Prostate gland (tissue), 2 donors: ENCODE measurements at regions of chr17 and their contacts with region 1.

Region 1: GRCh38 chr17:10618202-10618635 is 38.9 kb downstream of the MYH3 start:
- DNase-seq: peak; percentile 45
- H3K4me3 ChIP-seq: no peak overlapping the region
- H3K27ac ChIP-seq: no peak overlapping the region
- H3K4me1 ChIP-seq: no peaks in the 10 kb centered on the region
- H3K27me3 ChIP-seq: no peaks in the 10 kb centered on the region
- CTCF ChIP-seq: peak in 3 of 4 experiments; percentile 61 to 74 (median 71)
- POLR2A ChIP-seq: no peak

Region 2: GRCh38 chr17:9924735-9925191 is 693.5 kb before region 1 on chr17:
- intact Hi-C with region 1: loop called (anchors 5 kb)
- DNase-seq: peak; percentile 42
- H3K4me3 ChIP-seq: no peak overlapping the region
- H3K27ac ChIP-seq: no peak overlapping the region
- H3K4me1 ChIP-seq: no peaks in the 10 kb centered on the region
- H3K27me3 ChIP-seq: no peaks in the 10 kb centered on the region
- CTCF ChIP-seq: peak; percentile 60 to 86 (median 79)
- POLR2A ChIP-seq: no peak

Region 3: DNA sequence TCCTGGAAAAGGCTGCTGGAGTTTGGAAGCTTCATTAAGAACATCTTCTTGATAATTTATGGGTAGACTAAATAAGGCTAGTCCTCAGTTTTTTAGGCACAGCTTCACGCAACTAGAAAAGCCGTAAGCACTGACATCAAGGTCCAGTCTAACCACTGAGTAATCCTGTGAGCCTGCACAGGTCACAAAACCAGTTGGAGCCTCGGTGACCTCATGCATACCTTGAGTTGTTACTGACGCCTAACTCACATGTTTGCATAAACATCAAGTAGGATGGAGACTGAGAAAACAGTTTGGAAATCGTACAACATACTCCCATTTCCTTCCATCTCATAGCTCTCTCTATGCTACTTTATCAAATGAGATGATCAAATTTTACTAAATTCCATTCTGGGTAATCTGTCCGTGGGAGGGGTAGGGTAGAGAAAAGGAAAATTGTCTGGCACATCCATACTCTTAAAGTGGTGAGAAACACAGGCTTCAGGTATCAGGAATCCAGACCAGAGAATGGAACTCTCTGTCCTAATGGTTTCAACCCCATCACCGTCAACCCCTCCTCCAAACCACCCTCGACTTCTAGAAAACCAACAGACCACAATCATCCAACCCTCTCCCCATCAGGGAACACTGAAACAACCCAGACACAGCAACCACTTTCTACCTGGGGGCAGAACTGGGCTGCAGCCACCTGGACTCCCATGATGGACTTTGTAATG is 649.2 kb before region 1 on chr17:
- intact Hi-C with region 1: loop called (anchors 10 kb)
- DNase-seq: no peak
- H3K4me3 ChIP-seq: no peak overlapping the region
- H3K27ac ChIP-seq: no peak overlapping the region
- H3K4me1 ChIP-seq: no peaks in the 10 kb centered on the region
- H3K27me3 ChIP-seq: no peaks in the 10 kb centered on the region
- CTCF ChIP-seq: no peak
- POLR2A ChIP-seq: no peak

Region 4: GRCh38 chr17:10327640-10328039 is 290.6 kb before region 1 on chr17:
- intact Hi-C with region 1: loop called (anchors 2 kb)
- DNase-seq: peak; percentile 81
- H3K4me3 ChIP-seq: no peak overlapping the region
- H3K27ac ChIP-seq: no peak overlapping the region
- H3K4me1 ChIP-seq: no peaks in the 10 kb centered on the region
- H3K27me3 ChIP-seq: no peaks in the 10 kb centered on the region
- CTCF ChIP-seq: peak; percentile 85 to 98 (median 87)
- POLR2A ChIP-seq: no peak

Region 5: GRCh38 chr17:10471853-10472252 is 146.4 kb before region 1 on chr17:
- intact Hi-C with region 1: no loop called
- DNase-seq: no peak
- H3K4me3 ChIP-seq: no peak overlapping the region
- H3K27ac ChIP-seq: no peak overlapping the region
- H3K4me1 ChIP-seq: no peaks in the 10 kb centered on the region
- H3K27me3 ChIP-seq: no peaks in the 10 kb centered on the region
- CTCF ChIP-seq: no peak
- POLR2A ChIP-seq: no peak

Region 6: GRCh38 chr17:10600571-10600970 is 17.6 kb before region 1 on chr17:
- intact Hi-C with region 1: no loop called
- DNase-seq: no peak
- H3K4me3 ChIP-seq: no peak overlapping the region
- H3K27ac ChIP-seq: no peak overlapping the region
- H3K4me1 ChIP-seq: no peaks in the 10 kb centered on the region
- H3K27me3 ChIP-seq: no peaks in the 10 kb centered on the region
- CTCF ChIP-seq: no peak
- POLR2A ChIP-seq: no peak